Activated CD8-positive, alpha-beta T cell treated with anti-CD3 and anti-CD28 coated beads, Interleukin-2, amount 10 ng/mL, durations not matched to agents 7 days and 5 days (primary cell): ENCODE measurements at regions of chr11 and their contacts with region 1.

Region 1: DNA sequence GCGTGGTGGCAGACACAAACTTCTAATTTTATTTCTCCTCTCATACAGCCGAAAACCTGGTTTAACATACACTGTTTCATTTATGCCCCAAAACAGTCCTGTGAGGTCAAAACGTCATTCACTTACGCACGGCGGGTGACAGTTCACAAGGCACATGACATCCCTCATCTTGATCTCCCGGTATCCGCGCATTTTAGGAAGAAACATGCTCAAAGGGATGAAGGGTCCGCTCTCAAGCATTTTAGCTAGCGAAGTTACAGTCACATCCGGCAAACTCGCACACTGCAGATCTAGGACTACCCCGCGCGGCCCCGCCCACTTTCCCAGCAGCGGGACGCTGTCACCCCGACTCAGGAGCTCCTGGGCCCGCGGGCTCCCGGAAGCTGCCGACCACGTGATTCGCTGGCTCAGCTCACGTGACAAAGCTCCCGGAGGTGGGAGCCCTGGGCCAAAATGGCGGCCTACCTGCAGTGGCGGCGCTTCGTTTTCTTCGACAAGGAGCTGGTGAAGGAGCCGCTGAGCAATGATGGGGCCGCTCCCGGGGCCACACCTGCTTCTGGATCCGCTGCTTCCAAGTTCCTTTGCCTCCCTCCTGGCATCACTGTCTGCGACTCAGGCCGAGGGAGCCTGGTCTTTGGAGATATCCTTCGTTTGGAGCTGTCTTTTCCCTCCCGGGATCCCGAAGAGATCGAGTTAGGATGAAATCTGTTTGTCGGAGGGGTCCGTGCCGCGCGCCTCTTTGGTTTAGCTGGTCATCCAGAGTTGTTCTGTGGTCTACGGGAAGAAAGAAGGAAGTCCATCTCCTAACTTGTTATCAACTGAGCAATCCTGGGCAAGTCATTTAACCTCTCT is at the start of gene VPS11:
- DNase-seq: peak; percentile 99
- ATAC-seq: peak; percentile 99
- H3K4me3 Mint-ChIP-seq: peak within 1 kb of the TSS; percentile 89
- H3K27ac Mint-ChIP-seq: peak within 1 kb of the TSS; percentile 97
- H3K4me1 Mint-ChIP-seq: peaks cover 44% of the 10 kb centered on the region
- H3K27me3 Mint-ChIP-seq: no peaks in the 10 kb centered on the region
- total RNA-seq, gene VPS11: 30.8 to 31.6 TPM

Region 2: DNA sequence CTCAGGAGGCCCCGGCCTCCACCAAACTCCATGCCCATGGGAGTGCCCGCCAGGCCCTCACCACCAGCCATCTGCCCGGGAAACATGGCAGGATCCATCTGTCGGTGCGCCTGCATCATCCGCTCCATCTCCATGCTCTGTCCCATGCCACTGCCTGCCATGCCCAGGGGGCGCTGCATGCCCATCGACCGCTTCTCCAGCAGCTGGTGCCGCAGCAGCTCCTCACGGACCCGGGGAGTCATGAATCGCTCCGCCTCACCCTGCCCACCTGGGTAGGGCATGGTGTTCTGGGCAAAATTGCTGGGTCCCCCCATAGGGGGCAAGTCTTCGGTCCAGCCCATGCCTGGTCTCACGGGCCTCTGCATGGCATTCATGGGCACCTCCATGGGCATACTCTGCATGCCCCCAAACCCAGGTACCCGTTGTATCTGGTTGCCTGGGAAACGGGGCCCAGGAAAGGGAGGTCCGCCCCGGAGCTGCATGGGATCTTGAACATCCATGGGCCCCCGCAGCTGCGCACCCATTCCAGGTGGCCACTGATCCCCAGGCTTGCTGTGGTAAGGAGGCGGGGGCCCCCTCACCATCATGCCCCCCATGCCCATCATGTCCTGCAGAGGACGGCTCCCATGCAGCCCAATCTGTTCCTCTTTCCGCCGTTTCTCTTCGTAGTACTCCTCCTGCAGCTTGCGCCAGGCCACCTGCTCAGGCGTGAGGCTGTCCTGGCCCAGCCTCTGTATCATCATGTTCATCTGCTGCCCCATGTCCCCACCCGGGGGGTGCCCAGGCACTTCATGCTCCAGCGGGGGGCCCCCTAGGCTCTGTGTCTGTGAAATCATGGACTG is 165.9 kb before region 1 on chr11:
- CTCF ChIA-PET with region 1: no interaction called
- POLR2A ChIA-PET with region 1: no interaction called
- DNase-seq: no peak
- ATAC-seq: no peak
- H3K4me3 Mint-ChIP-seq: no peak overlapping the region
- H3K27ac Mint-ChIP-seq: no peak overlapping the region
- H3K4me1 Mint-ChIP-seq: peaks cover 12% of the 10 kb centered on the region
- H3K27me3 Mint-ChIP-seq: no peaks in the 10 kb centered on the region

Region 3: GRCh38 chr11:119018074-119018938 is 49.3 kb before region 1 on chr11 and contains the starts of genes RPS25 and TRAPPC4:
- CTCF ChIA-PET with region 1: no interaction called
- POLR2A ChIA-PET with region 1: interaction called, 10 read pairs
- DNase-seq: peak; percentile 98
- ATAC-seq: peak; percentile 93
- H3K4me3 Mint-ChIP-seq: peak within 1 kb of the TSS; percentile 99
- H3K27ac Mint-ChIP-seq: peak within 1 kb of the TSS; percentile 100
- H3K4me1 Mint-ChIP-seq: peaks cover 48% of the 10 kb centered on the region
- H3K27me3 Mint-ChIP-seq: no peaks in the 10 kb centered on the region
- total RNA-seq, gene RPS25: 1,115 to 1,170 TPM
- total RNA-seq, gene TRAPPC4: 58.6 to 65.0 TPM

Region 4: GRCh38 chr11:119057000-119057769 is 10.4 kb before region 1 on chr11 and contains the start of gene HYOU1:
- CTCF ChIA-PET with region 1: interaction called, 12 read pairs
- POLR2A ChIA-PET with region 1: interaction called, 26 read pairs
- DNase-seq: peak; percentile 99
- ATAC-seq: peak; percentile 96
- H3K4me3 Mint-ChIP-seq: peak within 1 kb of the TSS; percentile 97
- H3K27ac Mint-ChIP-seq: peak within 1 kb of the TSS; percentile 99
- H3K4me1 Mint-ChIP-seq: peaks cover 30% of the 10 kb centered on the region
- H3K27me3 Mint-ChIP-seq: no peaks in the 10 kb centered on the region
- total RNA-seq, gene HYOU1: 133 to 135 TPM

Region 5: GRCh38 chr11:119095066-119095880 is 27.7 kb after region 1 on chr11:
- CTCF ChIA-PET with region 1: interaction called, 7 read pairs
- POLR2A ChIA-PET with region 1: interaction called, 30 read pairs
- DNase-seq: peak; percentile 100
- ATAC-seq: peak; percentile 81
- H3K4me3 Mint-ChIP-seq: peak overlapping the region; percentile 95
- H3K27ac Mint-ChIP-seq: peak overlapping the region; percentile 97
- H3K4me1 Mint-ChIP-seq: peaks cover 59% of the 10 kb centered on the region
- H3K27me3 Mint-ChIP-seq: no peaks in the 10 kb centered on the region

Region 6: GRCh38 chr11:119196833-119197483 is 129.4 kb after region 1 on chr11:
- CTCF ChIA-PET with region 1: interaction called, 18 read pairs
- POLR2A ChIA-PET with region 1: interaction called, 3 read pairs
- DNase-seq: peak; percentile 85
- ATAC-seq: peak; percentile 96
- H3K4me3 Mint-ChIP-seq: no peak overlapping the region
- H3K27ac Mint-ChIP-seq: no peak overlapping the region
- H3K4me1 Mint-ChIP-seq: peaks cover 4% of the 10 kb centered on the region
- H3K27me3 Mint-ChIP-seq: peaks cover 3% of the 10 kb centered on the region